ENCODE measurements at regions of chr1 and their contacts with region 1.

Region 1: DNA sequence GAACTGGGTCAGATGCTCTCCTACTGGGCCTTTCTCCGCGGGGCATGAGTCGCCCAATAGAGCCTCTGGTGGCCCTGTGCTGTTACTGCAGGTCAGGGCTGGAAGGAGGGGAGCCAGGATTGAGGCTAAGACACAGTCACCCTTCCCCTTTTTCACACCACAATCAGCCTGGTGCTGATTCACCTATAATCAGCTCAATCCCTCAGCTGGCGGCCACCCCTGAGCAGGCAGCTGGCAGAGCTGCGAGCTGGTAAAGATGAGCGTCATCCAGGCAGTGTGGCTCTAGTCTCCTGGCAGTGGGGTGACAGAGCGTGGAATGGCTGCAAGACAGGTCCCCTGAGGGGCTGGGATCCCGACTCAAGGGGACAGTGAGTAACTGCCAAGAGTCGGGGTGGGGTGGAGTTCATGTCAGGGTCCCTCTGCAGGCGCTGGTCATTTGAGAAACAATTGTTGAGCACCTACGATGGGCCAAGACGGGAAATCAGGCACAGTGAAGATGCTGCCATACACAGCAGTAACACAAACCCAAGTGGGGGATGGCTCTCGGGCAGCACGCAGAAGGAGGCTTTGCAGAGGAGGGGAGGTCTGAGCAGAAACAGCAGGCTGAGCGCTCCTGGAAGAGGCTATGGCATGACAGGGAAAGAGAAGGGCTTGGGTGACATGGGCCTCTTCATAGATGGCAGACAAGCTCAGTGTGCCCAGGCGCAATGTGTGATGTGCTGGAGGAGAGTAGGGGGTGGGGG is 21.8 kb downstream of the ATF3 start:
- DNase-seq: peak in 1 of 2 experiments; percentile 84
- H3K4me3 ChIP-seq: no peak overlapping the region
- H3K27ac ChIP-seq: no peak overlapping the region
- H3K4me1 ChIP-seq: peaks cover 0 to 10% (median 4%) of the 10 kb centered on the region in 4 experiments; a peak in 6 of 7 replicates
- H3K27me3 ChIP-seq: no peaks in the 10 kb centered on the region
- CTCF ChIP-seq: peak; percentile 74 to 94 (median 88)
- EP300 ChIP-seq: no peak
- POLR2A ChIP-seq: no peak
- RAD21 ChIP-seq: peak; percentile 59 to 70

Region 2: GRCh38 chr1:212566522-212567479 is 63.5 kb before region 1 on chr1:
- CTCF ChIA-PET with region 1: no interaction called
- POLR2A ChIA-PET with region 1: no interaction called
- DNase-seq: no peak
- H3K4me3 ChIP-seq: no peak overlapping the region
- H3K27ac ChIP-seq: no peak overlapping the region
- H3K4me1 ChIP-seq: peaks cover 0 to 5% (median 0%) of the 10 kb centered on the region in 4 experiments; a peak in 1 of 7 replicates
- H3K27me3 ChIP-seq: no peaks in the 10 kb centered on the region
- CTCF ChIP-seq: no peak
- EP300 ChIP-seq: no peak
- POLR2A ChIP-seq: no peak
- RAD21 ChIP-seq: no peak

Region 3: DNA sequence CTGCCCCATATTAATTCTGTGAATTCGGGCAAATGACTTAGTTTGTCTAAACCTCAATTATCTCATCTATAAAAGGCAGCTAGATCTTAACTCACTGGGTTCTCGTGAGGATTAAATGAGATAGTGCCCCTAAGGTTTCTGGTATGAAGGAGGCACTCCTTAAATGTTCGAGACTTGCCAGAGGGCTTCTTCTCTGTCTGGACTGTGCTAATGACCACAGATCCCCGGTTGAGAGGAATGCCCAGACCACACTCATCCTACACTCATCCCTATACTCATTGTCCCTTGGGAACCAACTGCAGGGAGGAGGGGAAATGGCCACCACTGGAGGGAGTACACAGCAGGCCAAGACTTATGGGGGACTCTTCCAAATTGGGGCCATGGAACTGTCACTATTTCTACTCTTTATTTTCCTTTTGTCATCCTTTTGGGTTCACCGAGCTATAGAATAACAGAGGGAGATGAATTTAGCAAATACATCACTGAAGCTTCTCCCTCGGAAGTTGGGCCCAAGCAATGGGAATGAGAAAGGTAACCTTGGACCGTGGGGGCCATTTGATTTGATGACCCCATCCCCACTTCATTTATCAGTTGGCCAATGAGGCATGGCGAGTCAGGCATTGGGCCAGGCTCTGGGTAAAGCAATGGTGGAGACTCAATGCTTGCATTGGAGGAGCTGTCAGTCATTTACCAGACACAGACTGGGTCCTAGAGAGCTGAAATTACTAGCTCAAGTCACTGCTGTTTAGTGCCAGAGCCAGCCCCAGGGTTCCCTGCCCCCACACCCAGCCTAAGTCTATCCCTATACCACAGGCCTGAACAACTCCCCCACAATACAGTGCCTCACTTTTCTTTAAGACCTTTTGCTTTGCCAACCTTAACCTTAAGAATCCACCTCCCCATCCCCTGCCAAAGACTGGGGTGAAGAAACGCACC is 16.6 kb before region 1 on chr1:
- CTCF ChIA-PET with region 1: interaction called, 47 read pairs
- POLR2A ChIA-PET with region 1: interaction called, 15 read pairs
- DNase-seq: no peak
- H3K4me3 ChIP-seq: no peak overlapping the region
- H3K27ac ChIP-seq: no peak overlapping the region
- H3K4me1 ChIP-seq: peaks cover 8 to 31% (median 19%) of the 10 kb centered on the region in 4 experiments; a peak in 6 of 7 replicates
- H3K27me3 ChIP-seq: peaks cover 0 to 14% (median 6%) of the 10 kb centered on the region in 4 experiments; a peak in 3 of 7 replicates
- CTCF ChIP-seq: no peak
- EP300 ChIP-seq: no peak
- POLR2A ChIP-seq: peak; percentile 23 to 53; a peak in 2 of 3 replicates
- RAD21 ChIP-seq: no peak

Region 4: DNA sequence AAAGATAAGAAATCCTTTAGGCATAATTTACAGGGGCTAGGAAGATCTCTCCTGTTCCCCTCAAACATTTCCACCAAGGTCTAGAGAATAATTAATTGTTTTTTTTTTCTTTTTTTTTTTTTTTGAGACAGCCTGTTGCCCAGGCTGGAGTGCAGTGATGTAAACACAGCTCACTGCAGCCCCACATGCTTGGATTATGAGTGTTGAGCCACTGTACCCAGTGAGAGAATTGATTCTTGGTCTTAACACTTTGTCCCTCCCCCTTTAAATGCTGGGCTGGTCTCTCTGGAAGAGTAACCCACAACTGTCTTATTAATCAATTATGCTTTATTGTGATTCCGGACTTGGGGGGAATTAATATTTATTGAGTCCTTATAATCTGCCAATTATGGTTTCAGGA is 11.6 kb after region 1 on chr1:
- CTCF ChIA-PET with region 1: interaction called, 59 read pairs
- POLR2A ChIA-PET with region 1: no interaction called
- DNase-seq: no peak
- H3K4me3 ChIP-seq: no peak overlapping the region
- H3K27ac ChIP-seq: no peak overlapping the region
- H3K4me1 ChIP-seq: peaks cover 0 to 7% (median 2%) of the 10 kb centered on the region in 4 experiments; a peak in 2 of 7 replicates
- H3K27me3 ChIP-seq: no peaks in the 10 kb centered on the region; a peak in 1 of 7 replicates
- CTCF ChIP-seq: no peak
- EP300 ChIP-seq: no peak
- POLR2A ChIP-seq: no peak
- RAD21 ChIP-seq: no peak

Region 5: DNA sequence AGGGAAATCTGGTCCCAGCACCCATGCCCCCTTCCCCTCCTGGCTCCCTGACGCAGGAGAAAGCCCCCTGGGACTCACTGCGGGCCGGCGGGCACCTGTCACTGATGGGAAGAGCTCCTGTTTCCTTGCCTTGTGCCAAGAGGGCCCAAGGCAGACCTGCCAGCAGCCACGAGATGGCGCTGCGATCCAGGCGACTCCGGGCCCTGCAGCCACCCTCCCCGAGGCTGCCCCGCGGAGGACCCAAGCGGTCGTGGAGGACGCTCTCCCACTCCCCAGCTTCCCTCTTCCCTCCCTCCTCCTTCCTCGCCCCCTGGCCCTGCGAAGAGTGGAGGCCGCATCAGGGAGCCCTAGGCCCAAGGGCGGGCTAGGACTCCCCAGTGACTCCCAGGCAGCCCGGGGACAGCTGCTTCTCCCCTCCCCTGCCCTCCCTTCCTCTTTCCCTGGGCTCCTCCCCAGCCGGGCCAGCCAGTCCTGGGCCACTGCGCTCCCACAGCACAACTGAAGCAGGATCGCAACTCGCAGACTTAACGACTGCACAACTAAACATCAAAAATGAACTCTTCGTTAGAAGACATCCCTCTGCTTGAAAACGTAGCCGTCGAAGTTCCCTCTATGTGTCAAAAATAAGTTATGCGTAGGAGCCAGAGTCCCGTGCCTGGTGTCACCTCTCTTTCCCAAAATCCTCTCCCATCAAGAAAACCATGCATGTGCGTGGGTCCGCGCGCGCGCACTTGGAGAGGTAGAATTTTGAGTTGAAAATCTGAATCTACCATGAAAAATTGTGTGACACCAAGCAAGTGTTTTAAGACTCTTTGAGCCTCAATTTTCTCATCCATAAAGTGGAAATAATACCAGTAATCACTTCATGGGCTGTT is 35.1 kb after region 1 on chr1:
- CTCF ChIA-PET with region 1: interaction called, 11 read pairs
- POLR2A ChIA-PET with region 1: no interaction called
- DNase-seq: peak in 1 of 2 experiments; percentile 95
- H3K4me3 ChIP-seq: peak overlapping the region; percentile 34 to 77 (median 62)
- H3K27ac ChIP-seq: no peak overlapping the region
- H3K4me1 ChIP-seq: no peaks in the 10 kb centered on the region; a peak in 1 of 7 replicates
- H3K27me3 ChIP-seq: peaks cover 0 to 9% (median 5%) of the 10 kb centered on the region in 4 experiments; a peak in 4 of 7 replicates
- CTCF ChIP-seq: peak; percentile 95 to 96 (median 96)
- EP300 ChIP-seq: no peak
- POLR2A ChIP-seq: no peak
- RAD21 ChIP-seq: peak; percentile 90 to 94

Region 6: GRCh38 chr1:212827824-212828278 is 197.5 kb after region 1 on chr1:
- CTCF ChIA-PET with region 1: no interaction called
- POLR2A ChIA-PET with region 1: no interaction called
- DNase-seq: no peak
- H3K4me3 ChIP-seq: no peak overlapping the region
- H3K27ac ChIP-seq: no peak overlapping the region
- H3K4me1 ChIP-seq: peaks cover 0 to 2% (median 0%) of the 10 kb centered on the region in 4 experiments; a peak in 1 of 7 replicates
- H3K27me3 ChIP-seq: no peaks in the 10 kb centered on the region
- CTCF ChIP-seq: no peak
- EP300 ChIP-seq: no peak
- POLR2A ChIP-seq: no peak
- RAD21 ChIP-seq: no peak